Activated naive CD4-positive, alpha-beta T cell treated with anti-CD3 and anti-CD28 coated beads for 36 hours (primary cell): ENCODE measurements at regions of chr5 and their contacts with region 1.

Region 1: DNA sequence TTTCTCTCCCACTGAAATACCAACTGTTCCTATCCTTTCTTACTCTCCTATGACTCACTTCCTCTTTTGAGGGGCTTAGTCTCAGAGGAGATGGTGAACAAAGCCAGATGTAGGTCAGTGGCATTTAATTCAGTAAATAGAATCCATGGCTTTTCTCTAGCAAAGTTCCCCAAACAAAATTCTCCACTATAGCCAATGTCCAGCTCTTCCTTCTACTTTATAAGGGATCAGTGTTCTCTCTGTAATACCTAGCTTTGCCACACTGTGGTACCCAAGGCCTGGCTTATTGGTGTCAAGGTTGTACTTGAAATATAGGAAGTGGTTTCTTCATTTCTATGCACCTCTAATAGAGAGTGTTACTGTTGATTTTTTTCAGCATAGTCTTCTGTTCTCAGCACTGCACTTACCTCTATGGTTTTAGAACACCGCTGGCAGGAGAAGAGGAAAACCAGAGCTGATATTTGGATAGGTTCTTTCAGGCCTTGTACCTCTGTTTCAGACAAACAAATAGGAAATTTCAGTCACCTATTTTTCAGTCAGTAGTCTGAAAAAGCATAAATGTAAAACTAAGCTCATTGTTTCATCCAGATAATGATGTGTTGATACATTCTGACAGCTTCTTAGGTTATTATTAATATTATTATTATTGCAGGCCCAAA is 40.6 kb upstream of the ITGA2 start:
- DNase-seq: peak; percentile 83
- H3K4me3 Mint-ChIP-seq: no peak overlapping the region
- H3K27ac Mint-ChIP-seq: no peak overlapping the region
- H3K4me1 Mint-ChIP-seq: peaks cover 14% of the 10 kb centered on the region
- H3K27me3 Mint-ChIP-seq: no peaks in the 10 kb centered on the region

Region 2: GRCh38 chr5:53035868-53036381 is 87.4 kb after region 1 on chr5:
- CTCF ChIA-PET with region 1: interaction called, 24 read pairs
- intact Hi-C with region 1: loop called (anchors 1 kb)
- DNase-seq: no peak
- H3K4me3 Mint-ChIP-seq: no peak overlapping the region
- H3K27ac Mint-ChIP-seq: no peak overlapping the region
- H3K4me1 Mint-ChIP-seq: peaks cover 39% of the 10 kb centered on the region
- H3K27me3 Mint-ChIP-seq: no peaks in the 10 kb centered on the region

Region 3: GRCh38 chr5:53089345-53089991 is 140.9 kb after region 1 on chr5:
- CTCF ChIA-PET with region 1: interaction called, 181 read pairs
- intact Hi-C with region 1: no loop called
- DNase-seq: no peak
- H3K4me3 Mint-ChIP-seq: peak overlapping the region; percentile 45
- H3K27ac Mint-ChIP-seq: peak overlapping the region; percentile 61
- H3K4me1 Mint-ChIP-seq: peaks cover 32% of the 10 kb centered on the region
- H3K27me3 Mint-ChIP-seq: no peaks in the 10 kb centered on the region

Region 4: DNA sequence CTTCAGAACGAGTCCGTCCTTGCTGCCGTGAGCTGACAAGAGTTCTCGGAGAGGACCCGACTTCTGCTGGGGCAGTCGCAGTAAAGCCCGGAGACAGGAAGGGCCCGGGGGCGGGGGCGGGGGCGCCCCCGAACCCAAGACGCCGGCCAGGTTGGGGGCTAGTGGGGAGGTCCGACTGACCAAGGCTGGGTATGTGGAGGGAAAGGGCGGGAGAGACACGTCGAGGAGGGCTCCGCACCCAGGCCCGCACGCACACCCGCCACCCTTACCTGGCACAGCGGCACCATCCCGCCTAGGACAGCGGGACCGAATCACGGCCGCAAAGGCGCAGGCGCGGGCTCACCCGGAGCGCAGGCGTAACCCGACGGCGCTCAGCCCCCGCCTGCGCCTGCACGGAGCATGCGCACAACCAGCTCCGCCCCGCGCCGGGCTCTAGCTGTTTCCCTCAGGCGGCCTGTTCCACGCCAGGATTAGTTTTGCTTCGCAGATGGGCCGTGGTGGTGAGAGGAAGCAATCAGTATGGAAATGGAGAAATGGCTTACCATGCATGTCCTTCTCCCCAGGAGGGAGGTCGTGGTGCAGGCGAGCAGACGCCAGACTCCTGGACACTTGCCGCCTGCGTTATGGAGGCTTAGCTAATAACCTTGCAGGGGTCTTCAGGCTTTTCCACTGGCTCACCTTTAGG is 161.0 kb after region 1 on chr5 and contains the start of gene MOCS2:
- CTCF ChIA-PET with region 1: interaction called, 22 read pairs
- intact Hi-C with region 1: no loop called
- DNase-seq: peak; percentile 91
- H3K4me3 Mint-ChIP-seq: peak within 1 kb of the TSS; percentile 92
- H3K27ac Mint-ChIP-seq: peak within 1 kb of the TSS; percentile 86
- H3K4me1 Mint-ChIP-seq: peaks cover 37% of the 10 kb centered on the region
- H3K27me3 Mint-ChIP-seq: no peaks in the 10 kb centered on the region
- total RNA-seq, gene MOCS2: 29.4 to 30.9 TPM

Region 5: GRCh38 chr5:53123702-53124101 is 175.2 kb after region 1 on chr5:
- CTCF ChIA-PET with region 1: no interaction called
- intact Hi-C with region 1: no loop called
- DNase-seq: no peak
- H3K4me3 Mint-ChIP-seq: no peak overlapping the region
- H3K27ac Mint-ChIP-seq: no peak overlapping the region
- H3K4me1 Mint-ChIP-seq: no peaks in the 10 kb centered on the region
- H3K27me3 Mint-ChIP-seq: no peaks in the 10 kb centered on the region

Region 6: GRCh38 chr5:54229041-54229780 is 1280.7 kb after region 1 on chr5:
- CTCF ChIA-PET with region 1: no interaction called
- intact Hi-C with region 1: loop called (anchors 5 kb)
- DNase-seq: peak; percentile 87
- H3K4me3 Mint-ChIP-seq: no peak overlapping the region
- H3K27ac Mint-ChIP-seq: no peak overlapping the region
- H3K4me1 Mint-ChIP-seq: peaks cover 2% of the 10 kb centered on the region
- H3K27me3 Mint-ChIP-seq: no peaks in the 10 kb centered on the region